Prostate gland (tissue), 2 donors: ENCODE measurements at regions of chr4 and their contacts with region 1.

Region 1: DNA sequence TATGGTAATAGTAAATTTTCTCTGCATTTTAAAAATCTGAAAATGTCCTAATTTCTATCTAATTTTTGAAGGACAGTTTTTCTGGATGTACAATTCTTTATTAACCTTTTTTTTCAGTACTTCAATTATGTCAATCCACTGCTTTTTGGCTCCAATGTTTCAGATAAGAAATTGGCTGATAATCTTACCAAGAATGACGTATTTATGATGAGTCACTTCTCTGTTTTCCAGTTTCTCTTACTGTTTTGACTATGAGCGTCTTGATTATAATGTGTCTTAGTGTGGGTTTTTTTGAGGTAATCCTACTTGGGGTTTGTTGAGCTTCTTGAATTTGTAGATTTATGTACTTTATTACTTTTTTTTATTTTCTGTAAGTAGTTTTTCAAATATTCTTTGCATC is 47.2 kb downstream of the UGT2B11 start:
- DNase-seq: no peak
- H3K4me3 ChIP-seq: no peak overlapping the region
- H3K27ac ChIP-seq: no peak overlapping the region
- H3K4me1 ChIP-seq: no peaks in the 10 kb centered on the region
- H3K27me3 ChIP-seq: no peaks in the 10 kb centered on the region
- CTCF ChIP-seq: no peak
- POLR2A ChIP-seq: no peak

Region 2: DNA sequence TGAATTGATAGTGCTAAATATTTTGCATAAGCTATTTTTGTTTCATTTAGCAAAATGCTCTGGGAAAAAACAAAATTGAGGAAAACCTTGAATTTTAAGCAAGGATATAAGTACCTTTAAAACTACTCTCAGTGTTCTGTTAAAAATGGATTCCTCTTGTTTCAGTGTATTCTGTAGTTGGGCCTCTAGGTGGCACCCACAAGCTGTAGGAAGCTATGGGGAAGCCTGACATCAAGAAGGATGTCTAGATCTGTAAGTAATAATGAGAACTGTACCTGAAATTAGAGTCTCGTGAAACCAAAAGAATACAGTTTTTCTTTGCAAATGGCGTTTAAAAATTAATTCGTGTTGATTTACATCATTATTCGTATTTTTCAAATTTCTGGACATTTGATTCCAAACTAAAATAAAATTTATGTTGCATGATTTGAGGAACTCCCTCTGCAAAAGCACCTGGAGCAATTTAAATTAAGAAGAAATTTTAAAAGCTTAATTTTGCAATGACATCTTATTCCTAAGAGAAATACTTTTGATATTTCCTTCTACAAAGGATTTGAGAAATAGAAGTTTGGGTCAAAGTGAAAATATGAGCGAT is 668.8 kb before region 1 on chr4:
- intact Hi-C with region 1: loop called (anchors 5 kb)
- DNase-seq: peak; percentile 44
- H3K4me3 ChIP-seq: no peak overlapping the region
- H3K27ac ChIP-seq: no peak overlapping the region
- H3K4me1 ChIP-seq: no peaks in the 10 kb centered on the region
- H3K27me3 ChIP-seq: no peaks in the 10 kb centered on the region
- CTCF ChIP-seq: peak in 3 of 4 experiments; percentile 71 to 81 (median 74)
- POLR2A ChIP-seq: no peak

Region 3: DNA sequence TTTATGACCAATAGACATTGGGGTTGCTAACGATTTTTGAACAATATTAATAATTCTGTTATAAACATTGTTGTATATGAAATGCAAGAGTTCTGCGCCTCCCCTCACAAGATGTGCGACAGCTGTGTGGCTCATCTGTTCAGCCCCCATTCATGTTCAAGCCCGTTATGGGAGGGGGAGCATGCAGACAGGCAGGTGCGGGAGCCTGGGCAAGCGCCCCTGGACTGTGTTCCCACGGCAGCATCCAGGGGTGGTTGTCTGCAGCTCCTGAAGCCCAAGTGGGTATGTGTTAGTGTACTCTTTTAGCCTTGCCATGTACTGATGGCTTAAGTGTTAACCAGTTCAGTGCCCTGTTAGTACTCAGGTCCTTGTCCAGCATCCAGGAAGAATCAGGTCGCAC is 250.3 kb before region 1 on chr4:
- intact Hi-C with region 1: no loop called
- DNase-seq: no peak
- H3K4me3 ChIP-seq: no peak overlapping the region
- H3K27ac ChIP-seq: no peak overlapping the region
- H3K4me1 ChIP-seq: no peaks in the 10 kb centered on the region
- H3K27me3 ChIP-seq: no peaks in the 10 kb centered on the region
- CTCF ChIP-seq: no peak
- POLR2A ChIP-seq: no peak

Region 4: DNA sequence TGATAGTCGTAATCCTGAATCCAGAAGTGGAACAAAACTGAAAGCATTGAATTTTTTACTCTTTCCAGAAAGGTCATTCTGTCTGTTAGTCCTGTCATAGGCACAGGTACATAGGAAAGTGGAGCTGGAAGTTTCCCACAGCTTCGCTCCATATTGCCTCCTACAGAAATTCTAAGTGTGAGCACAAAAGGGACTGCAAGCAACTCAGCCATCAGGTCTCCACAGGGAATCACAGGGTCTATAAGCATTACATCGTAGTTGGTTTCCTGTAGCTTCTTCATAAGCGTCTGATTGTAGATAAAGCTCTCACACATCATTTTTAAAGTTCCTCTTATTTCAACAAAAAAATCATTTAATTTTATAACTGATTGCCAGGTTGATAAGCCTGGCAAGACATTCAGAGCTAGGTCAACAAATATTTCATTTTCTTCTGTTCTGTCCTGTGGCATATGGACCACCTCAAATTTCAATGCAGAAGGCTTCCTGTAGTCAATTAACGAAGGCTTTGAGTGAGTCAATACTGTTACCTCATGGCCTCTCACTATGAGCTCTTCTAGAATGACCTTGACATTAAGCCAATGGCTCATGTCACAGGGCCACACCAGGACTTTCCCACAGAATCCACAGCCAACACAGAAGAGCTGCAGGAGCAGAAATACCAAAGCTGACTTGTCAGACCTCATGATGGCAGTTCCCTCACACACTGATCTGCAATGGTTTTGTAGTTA is 216.1 kb before region 1 on chr4 and contains the start of gene UGT2A3:
- intact Hi-C with region 1: no loop called
- DNase-seq: no peak
- H3K4me3 ChIP-seq: no peak within 1 kb of the TSS
- H3K27ac ChIP-seq: no peak within 1 kb of the TSS
- H3K4me1 ChIP-seq: no peaks in the 10 kb centered on the region
- H3K27me3 ChIP-seq: no peaks in the 10 kb centered on the region
- CTCF ChIP-seq: no peak
- POLR2A ChIP-seq: no peak
- total RNA-seq, gene UGT2A3: not detected